ENCODE measurements at regions of chr15 and their contacts with region 1.

Region 1: DNA sequence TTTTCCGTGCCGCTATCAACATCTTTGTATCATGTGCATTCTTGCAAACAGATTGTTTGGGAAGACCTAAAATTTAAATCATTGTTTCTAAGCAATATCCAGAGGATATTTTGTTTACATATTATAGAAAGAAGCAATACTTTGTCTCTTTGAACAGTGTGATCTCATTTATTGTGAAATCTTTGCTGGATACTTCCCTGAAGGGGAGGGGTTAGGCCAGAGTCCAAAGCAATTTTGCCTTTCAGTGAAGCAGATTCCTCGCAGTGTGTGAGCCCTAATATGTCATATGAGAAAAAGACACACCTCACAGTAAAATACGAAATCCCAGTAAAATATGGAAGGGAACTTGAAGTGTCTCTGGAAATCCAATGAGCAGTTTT is 158.7 kb upstream of the SLCO3A1 start:
- DNase-seq: no peak

Region 2: DNA sequence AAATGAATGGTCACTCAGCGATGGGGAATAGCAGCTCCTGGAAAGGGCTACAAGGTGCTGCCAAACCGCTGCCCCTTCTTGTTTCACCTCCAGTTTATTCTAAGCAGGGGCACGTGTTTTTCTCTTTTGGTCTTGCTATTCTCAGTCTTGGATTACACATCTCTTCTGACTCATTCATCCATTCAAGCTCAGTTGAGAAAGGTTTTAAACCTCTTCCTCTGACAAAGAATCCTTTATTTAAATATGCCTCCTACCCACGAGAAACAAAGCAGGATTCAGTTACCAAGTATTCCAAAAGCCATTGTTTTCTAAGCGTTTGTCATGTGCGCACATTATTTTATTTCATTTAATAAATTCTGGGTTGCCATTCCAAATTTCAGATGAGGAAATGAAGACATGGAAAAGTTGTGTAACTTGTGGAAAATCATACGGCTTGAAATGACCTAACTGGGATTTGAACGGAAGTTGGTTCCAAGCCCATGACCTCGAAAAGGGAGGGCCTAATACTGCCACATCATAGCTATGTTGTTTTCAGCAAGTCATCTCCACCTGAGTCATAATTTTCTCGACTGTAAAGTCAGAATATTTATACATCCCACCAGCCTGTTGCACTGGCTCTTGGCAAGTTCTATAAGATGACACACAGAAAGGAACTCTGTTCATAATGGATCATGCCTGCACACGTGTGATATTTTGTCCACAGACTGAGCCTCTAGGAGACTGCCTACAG is 133.3 kb before region 1 on chr15:
- intact Hi-C with region 1: loop called (anchors 2 kb)
- DNase-seq: no peak

Region 3: GRCh38 chr15:91572114-91572540 is 122.7 kb before region 1 on chr15:
- intact Hi-C with region 1: no loop called
- DNase-seq: no peak

Region 4: GRCh38 chr15:91627473-91628278 is 67.1 kb before region 1 on chr15:
- intact Hi-C with region 1: no loop called
- DNase-seq: no peak

Region 5: DNA sequence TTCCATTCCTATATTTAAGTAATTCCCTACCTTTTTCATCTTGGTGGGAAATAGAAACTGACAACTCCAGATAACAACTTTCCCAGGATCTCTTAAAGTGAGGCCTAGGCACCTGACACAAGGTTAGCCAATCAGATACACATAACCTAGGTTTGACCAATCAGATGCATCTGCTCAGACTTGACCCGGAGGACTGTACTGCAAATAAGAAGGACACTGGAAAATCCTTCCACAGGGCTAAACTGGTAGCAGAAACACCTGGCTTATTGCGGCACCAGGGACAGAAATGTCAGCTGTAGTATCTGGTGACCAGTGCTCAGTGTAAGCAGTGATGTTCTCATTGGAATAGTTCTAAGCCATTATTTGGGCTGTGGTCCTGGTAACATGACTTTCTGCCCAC is 45.8 kb before region 1 on chr15:
- intact Hi-C with region 1: no loop called
- DNase-seq: no peak

Region 6: GRCh38 chr15:91921188-91921842 is 226.5 kb after region 1 on chr15:
- intact Hi-C with region 1: no loop called
- DNase-seq: no peak